ENCODE measurements at regions of chr4 and their contacts with region 1.

Region 1: GRCh38 chr4:6087673-6088341 is 69.6 kb upstream of the C4orf50 start:
- DNase-seq: peak in 1 of 2 donors; percentile 11
- ATAC-seq: peak in 1 of 8 donors; percentile 50
- H3K4me3 ChIP-seq: no peak overlapping the region
- H3K27ac ChIP-seq: no peak overlapping the region
- H3K4me1 ChIP-seq: no peaks in the 10 kb centered on the region
- H3K27me3 ChIP-seq: peaks cover 0 to 50% (median 24%) of the 10 kb centered on the region in 7 donors
- CTCF ChIP-seq: peak in 7 of 9 donors; percentile 35 to 56 (median 50)

Region 2: GRCh38 chr4:5998333-5998936 is 89.4 kb before region 1 on chr4:
- intact Hi-C with region 1: loop called in 8 of 10 experiments (anchors 2 to 5 kb)
- DNase-seq: peak; percentile 30 to 36
- ATAC-seq: peak; percentile 49 to 77 (median 72)
- H3K4me3 ChIP-seq: no peak overlapping the region
- H3K27ac ChIP-seq: no peak overlapping the region
- H3K4me1 ChIP-seq: no peaks in the 10 kb centered on the region
- H3K27me3 ChIP-seq: peaks cover 6 to 53% (median 37%) of the 10 kb centered on the region in 7 donors
- CTCF ChIP-seq: peak; percentile 75 to 93 (median 90)

Region 3: GRCh38 chr4:6128221-6128850 is 40.5 kb after region 1 on chr4:
- intact Hi-C with region 1: no loop called
- DNase-seq: no peak
- ATAC-seq: no peak
- H3K4me3 ChIP-seq: no peak overlapping the region
- H3K27ac ChIP-seq: no peak overlapping the region
- H3K4me1 ChIP-seq: no peaks in the 10 kb centered on the region
- H3K27me3 ChIP-seq: peaks cover 0 to 31% (median 17%) of the 10 kb centered on the region in 7 donors
- CTCF ChIP-seq: no peak

Measured in heart right ventricle (tissue), 16 donors.